B cell (primary cell): ENCODE measurements at regions of chr18 and their contacts with region 1.

Region 1: DNA sequence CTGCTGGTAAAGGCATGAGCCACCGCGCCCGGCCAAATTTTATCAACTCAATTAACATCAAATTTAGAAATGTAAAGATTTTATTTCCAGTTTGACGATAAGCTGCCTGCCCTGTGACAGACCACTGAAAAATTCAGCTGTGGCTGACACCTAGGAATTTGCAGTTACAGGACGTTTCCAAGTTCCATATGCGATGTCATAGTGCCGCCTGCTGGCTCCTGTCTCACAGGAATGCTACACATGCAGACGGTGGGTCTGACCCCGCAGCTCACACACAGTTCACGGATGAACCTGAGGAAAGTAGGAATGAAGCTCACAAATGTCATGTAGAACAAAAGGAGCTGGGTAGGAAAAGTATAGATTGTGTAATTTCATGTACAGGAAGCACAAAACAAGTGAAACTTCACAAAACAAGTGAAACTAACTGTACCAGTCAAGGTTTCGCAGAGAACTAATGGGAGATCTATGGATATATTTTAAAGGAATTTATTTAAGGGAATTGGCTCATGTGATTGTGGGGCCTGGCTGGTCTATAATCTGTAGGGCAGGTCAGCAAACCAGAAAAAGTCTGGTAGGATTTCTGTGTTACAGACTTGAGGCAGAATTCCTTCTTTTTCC is 13.2 kb upstream of the SEH1L start:
- DNase-seq: peak; percentile 83
- ATAC-seq: peak; percentile 68
- H3K4me3 ChIP-seq: no peak overlapping the region
- H3K4me3 Mint-ChIP-seq: no peak overlapping the region
- H3K27ac ChIP-seq: no peak overlapping the region
- H3K27ac Mint-ChIP-seq: no peak overlapping the region
- H3K4me1 ChIP-seq: no peaks in the 10 kb centered on the region
- H3K4me1 Mint-ChIP-seq: peaks cover 2% of the 10 kb centered on the region
- H3K27me3 ChIP-seq: no peaks in the 10 kb centered on the region
- H3K27me3 Mint-ChIP-seq: peaks cover 7% of the 10 kb centered on the region
- CTCF ChIP-seq: peak; percentile 94

Region 2: DNA sequence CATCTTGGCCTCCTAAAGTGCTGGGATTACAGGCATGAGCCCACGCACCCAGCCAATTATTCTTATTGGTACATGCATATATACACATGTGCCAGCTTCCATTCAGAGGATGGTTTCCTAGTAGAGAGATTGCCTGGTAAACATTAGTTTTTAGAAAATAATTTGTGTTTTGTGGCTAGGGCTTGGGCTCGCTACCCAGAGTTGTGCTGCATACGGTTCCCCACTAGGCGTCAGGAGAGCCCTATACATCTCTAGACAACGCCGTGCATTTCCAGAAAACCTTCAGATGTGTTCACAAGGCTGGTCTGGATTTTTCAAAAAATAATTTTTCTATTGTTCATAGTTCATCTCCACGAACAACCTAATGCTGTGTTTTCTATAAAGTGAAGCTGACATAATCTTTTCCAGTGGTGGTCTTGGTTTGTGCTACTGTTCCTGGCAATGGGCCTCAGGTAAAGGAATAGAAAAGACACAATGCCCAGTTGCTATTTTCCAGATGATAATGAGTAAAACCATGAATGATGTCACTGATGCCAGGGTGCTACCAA is 542.9 kb before region 1 on chr18:
- CTCF ChIA-PET with region 1: interaction called, 35 read pairs
- POLR2A ChIA-PET with region 1: no interaction called
- intact Hi-C with region 1: loop called (anchors 1 kb)
- DNase-seq: peak; percentile 68
- ATAC-seq: peak; percentile 94
- H3K4me3 ChIP-seq: no peak overlapping the region
- H3K4me3 Mint-ChIP-seq: no peak overlapping the region
- H3K27ac ChIP-seq: no peak overlapping the region
- H3K27ac Mint-ChIP-seq: no peak overlapping the region
- H3K4me1 ChIP-seq: no peaks in the 10 kb centered on the region
- H3K4me1 Mint-ChIP-seq: no peaks in the 10 kb centered on the region
- H3K27me3 ChIP-seq: peaks cover 0 to 7% (median 0%) of the 10 kb centered on the region in 4 experiments
- H3K27me3 Mint-ChIP-seq: peaks cover 9% of the 10 kb centered on the region
- CTCF ChIP-seq: peak; percentile 84

Region 3: DNA sequence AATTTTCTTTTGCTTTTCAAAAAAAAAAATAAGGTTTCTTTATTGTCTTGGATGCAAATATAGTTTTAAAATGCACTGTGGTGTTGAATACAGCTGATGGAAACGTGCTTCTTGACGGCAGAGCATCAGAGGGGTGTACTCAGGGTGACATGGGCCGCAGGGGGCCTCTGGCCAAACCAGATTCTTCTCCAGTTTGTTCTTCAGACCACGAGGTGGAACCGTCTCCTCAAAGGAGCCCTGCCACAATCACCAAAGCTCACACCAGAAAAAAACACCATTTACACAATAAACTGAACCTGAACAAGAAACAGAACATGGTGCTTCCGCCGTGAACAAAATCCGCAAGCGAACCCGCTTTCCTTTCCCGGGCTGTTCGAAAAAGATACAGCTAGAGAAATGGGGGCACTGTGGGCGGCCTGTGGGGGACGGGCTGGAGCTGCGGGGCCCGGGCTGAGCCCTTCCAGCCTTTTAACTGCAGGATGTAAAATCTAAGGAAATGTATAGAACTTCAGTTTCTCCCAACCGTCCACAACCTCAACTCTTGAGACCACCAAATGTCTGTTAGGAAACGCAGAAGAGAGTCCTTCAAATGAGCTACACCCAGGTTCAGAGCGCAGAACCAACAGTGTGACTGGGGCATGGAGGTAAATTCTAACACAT is 197.2 kb before region 1 on chr18:
- CTCF ChIA-PET with region 1: interaction called, 200 read pairs
- POLR2A ChIA-PET with region 1: no interaction called
- intact Hi-C with region 1: no loop called
- DNase-seq: no peak
- ATAC-seq: no peak
- H3K4me3 ChIP-seq: no peak overlapping the region
- H3K4me3 Mint-ChIP-seq: no peak overlapping the region
- H3K27ac ChIP-seq: no peak overlapping the region
- H3K27ac Mint-ChIP-seq: no peak overlapping the region
- H3K4me1 ChIP-seq: no peaks in the 10 kb centered on the region
- H3K4me1 Mint-ChIP-seq: no peaks in the 10 kb centered on the region
- H3K27me3 ChIP-seq: no peaks in the 10 kb centered on the region
- H3K27me3 Mint-ChIP-seq: no peaks in the 10 kb centered on the region
- CTCF ChIP-seq: no peak

Region 4: GRCh38 chr18:12890506-12890905 is 44.1 kb before region 1 on chr18:
- CTCF ChIA-PET with region 1: interaction called, 12 read pairs
- POLR2A ChIA-PET with region 1: no interaction called
- intact Hi-C with region 1: loop called (anchors 1 kb)
- DNase-seq: no peak
- ATAC-seq: no peak
- H3K4me3 ChIP-seq: no peak overlapping the region
- H3K4me3 Mint-ChIP-seq: no peak overlapping the region
- H3K27ac ChIP-seq: no peak overlapping the region
- H3K27ac Mint-ChIP-seq: no peak overlapping the region
- H3K4me1 ChIP-seq: peaks cover 11 to 19% of the 10 kb centered on the region in 2 donors
- H3K4me1 Mint-ChIP-seq: peaks cover 22% of the 10 kb centered on the region
- H3K27me3 ChIP-seq: peaks cover 0 to 14% (median 2%) of the 10 kb centered on the region in 4 experiments
- H3K27me3 Mint-ChIP-seq: peaks cover 6% of the 10 kb centered on the region
- CTCF ChIP-seq: no peak

Region 5: DNA sequence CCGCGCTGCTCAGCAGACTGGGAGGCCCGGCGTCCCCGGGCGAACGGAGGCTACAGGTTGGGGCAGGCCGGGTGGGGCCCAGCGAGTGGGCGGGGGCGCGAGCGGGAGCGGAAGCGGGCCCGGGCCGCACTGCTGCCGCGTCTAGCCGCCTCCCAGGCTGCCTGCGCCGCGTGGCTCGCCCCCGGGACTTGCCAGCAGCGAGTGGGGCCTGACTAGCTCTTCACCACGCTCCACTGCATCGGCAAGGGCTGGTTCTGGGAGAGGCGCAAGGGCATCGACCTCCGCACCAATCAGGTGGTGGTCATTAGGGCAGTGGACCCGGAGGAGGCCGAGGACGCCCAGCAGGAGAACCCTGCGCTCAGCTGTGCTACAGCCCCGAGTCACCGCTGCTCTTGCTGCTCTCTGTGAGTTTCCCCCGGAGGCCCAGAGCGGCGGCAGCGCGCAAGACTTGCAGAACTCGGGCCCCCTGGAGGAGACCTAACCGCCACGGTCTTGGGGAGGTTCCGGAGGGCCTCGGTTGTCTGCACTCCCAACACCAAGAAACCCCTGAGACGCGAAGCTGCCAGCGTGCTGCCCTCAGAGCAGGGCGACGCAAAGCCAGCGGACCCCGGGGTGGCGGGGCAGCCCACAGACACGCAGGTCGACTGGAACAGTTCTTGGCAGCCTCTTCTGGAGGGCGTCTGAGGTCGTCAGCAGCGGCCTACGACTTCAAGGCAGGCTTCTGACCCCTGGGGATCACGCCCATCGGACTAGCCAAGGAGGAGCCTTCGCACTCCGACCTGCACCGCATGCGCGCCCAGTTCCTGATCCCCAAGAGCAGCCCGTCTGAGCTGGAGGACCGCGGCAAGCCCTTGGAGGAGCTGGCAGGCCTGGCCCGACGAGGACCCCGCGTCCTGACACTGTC is 23.3 kb before region 1 on chr18:
- CTCF ChIA-PET with region 1: interaction called, 15 read pairs
- POLR2A ChIA-PET with region 1: no interaction called
- intact Hi-C with region 1: no loop called
- DNase-seq: peak; percentile 68
- ATAC-seq: peak; percentile 87
- H3K4me3 ChIP-seq: peak overlapping the region in 4 of 5 experiments; percentile 43 to 67 (median 54)
- H3K4me3 Mint-ChIP-seq: peak overlapping the region; percentile 84
- H3K27ac ChIP-seq: no peak overlapping the region
- H3K27ac Mint-ChIP-seq: no peak overlapping the region
- H3K4me1 ChIP-seq: peaks cover 0 to 13% of the 10 kb centered on the region in 2 donors
- H3K4me1 Mint-ChIP-seq: peaks cover 8% of the 10 kb centered on the region
- H3K27me3 ChIP-seq: peaks cover 0 to 14% (median 2%) of the 10 kb centered on the region in 4 experiments
- H3K27me3 Mint-ChIP-seq: peaks cover 12% of the 10 kb centered on the region
- CTCF ChIP-seq: no peak

Region 6: DNA sequence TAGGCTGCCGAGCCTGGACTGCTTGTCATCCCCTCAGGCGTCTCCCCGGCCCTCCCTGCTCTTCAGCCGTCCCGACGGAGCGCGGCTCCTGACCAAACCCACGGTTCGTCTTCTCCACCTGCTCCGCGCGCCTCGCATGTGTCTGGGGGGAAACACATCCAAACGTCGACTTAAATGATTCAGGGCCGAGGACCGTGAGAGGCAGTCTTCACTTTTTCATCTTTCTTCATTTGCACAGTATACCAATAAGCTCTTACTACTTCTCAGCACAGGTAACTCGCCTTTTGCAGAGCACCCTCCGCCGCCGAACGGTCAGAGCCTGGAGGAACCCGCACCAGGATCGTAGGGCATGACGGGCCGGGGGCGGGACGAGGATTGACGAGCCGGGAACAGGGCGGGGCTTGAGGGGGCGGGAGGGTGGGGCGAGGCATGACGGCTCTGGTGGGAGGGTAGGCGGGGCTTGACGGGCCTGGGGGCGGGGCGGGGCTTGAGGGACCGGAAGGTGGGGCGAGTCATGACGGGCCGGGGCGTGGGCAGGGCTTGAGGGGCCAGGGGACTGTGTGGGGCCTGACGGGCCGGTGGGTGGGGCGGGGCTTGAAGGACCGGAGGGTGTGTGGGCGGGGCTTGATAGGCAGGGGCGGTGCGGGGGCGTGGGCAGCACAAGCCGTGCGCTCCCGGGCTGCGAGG is 12.9 kb after region 1 on chr18 and contains the start of gene SEH1L:
- CTCF ChIA-PET with region 1: interaction called, 18 read pairs
- POLR2A ChIA-PET with region 1: interaction called, 7 read pairs
- intact Hi-C with region 1: no loop called
- DNase-seq: no peak
- ATAC-seq: peak; percentile 91
- H3K4me3 ChIP-seq: peak within 1 kb of the TSS; percentile 69 to 97 (median 75)
- H3K4me3 Mint-ChIP-seq: peak within 1 kb of the TSS; percentile 96
- H3K27ac ChIP-seq: peak within 1 kb of the TSS; percentile 88 to 89
- H3K27ac Mint-ChIP-seq: peak within 1 kb of the TSS; percentile 94
- H3K4me1 ChIP-seq: peaks cover 5 to 22% of the 10 kb centered on the region in 2 donors
- H3K4me1 Mint-ChIP-seq: peaks cover 29% of the 10 kb centered on the region
- H3K27me3 ChIP-seq: no peaks in the 10 kb centered on the region
- H3K27me3 Mint-ChIP-seq: no peaks in the 10 kb centered on the region
- CTCF ChIP-seq: no peak
- total RNA-seq, gene SEH1L: 46.4 and 48.1 TPM in 2 replicates